Activated CD4-positive, alpha-beta memory T cell treated with anti-CD3 and anti-CD28 coated beads, Interleukin-2, amount 10 ng/mL, durations not matched to agents 7 days and 5 days (primary cell): ENCODE measurements at regions of chr1 and their contacts with region 1.

Region 1: DNA sequence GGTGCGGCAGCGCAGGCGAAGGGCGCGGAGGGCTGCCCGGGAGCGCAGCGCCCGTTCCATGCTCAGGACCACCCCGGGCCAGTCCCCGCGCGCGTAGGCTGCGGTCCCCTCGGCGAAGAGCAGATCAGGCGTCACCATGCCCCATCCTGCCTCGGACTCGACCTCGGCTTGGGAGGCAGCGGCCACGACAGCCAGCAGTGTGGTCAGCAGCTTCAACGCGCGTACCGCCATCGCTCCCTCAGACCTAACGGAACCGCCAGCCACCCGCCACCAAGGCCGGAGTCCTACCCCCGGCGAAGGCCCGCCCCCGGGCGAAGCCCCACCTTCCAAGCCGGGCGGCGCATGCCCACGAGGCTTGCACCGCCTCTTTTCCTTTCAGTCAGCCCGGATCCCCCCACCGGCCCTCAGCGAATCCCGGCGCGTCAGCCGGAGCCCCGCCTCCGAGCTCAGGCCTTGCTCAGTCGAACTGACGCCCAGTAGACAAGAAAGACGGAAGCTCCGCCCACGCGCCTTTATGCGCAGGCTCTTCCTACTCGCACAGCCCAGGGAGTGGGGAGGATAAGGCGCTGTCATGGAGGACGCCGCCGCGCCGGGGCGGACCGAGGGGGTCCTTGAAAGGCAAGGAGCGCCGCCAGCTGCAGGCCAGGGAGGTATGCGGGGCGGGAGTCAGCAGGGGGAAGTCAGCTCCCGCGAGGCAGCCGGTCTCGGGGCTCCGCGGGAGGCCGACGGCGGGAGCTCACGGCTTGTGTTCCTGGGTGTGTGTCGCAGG is at the starts of genes C1orf50 and P3H1:
- DNase-seq: peak; percentile 100
- H3K4me3 Mint-ChIP-seq: no peak within 1 kb of the TSS
- H3K27ac Mint-ChIP-seq: peak within 1 kb of the TSS; percentile 85
- H3K4me1 Mint-ChIP-seq: peaks cover 36% of the 10 kb centered on the region
- H3K27me3 Mint-ChIP-seq: no peaks in the 10 kb centered on the region
- total RNA-seq, gene C1orf50: 7.1 to 7.2 TPM
- total RNA-seq, gene P3H1: 40.1 to 43.3 TPM

Region 2: GRCh38 chr1:42657971-42658879 is 108.7 kb before region 1 on chr1 and contains the start of gene PPIH:
- CTCF ChIA-PET with region 1: interaction called, 13 read pairs
- POLR2A ChIA-PET with region 1: interaction called, 21 read pairs
- DNase-seq: peak; percentile 96
- H3K4me3 Mint-ChIP-seq: peak within 1 kb of the TSS; percentile 100
- H3K27ac Mint-ChIP-seq: peak within 1 kb of the TSS; percentile 95
- H3K4me1 Mint-ChIP-seq: peaks cover 49% of the 10 kb centered on the region
- H3K27me3 Mint-ChIP-seq: peaks cover 2% of the 10 kb centered on the region
- total RNA-seq, gene PPIH: 71.3 to 71.4 TPM

Region 3: DNA sequence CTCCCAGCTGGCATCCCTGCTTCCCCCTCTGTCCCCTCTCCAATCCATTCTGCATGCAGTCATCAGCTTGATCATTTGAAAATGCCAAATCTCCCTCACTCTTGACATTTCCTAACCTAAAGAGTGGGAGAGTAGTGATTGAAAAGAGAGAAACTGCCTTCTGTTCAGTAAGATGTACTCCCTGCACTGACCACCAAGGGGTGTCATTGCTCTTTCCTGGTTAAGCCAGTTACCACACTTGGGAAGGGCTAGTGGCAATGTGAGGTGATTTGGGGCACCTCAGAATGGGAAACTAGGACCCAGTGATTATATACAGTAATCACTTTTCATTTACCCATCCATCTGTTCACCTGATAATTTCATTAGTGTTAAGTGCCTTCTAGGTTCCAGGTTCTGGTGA is 10.9 kb after region 1 on chr1:
- CTCF ChIA-PET with region 1: interaction called, 21 read pairs
- POLR2A ChIA-PET with region 1: interaction called, 24 read pairs
- DNase-seq: peak; percentile 36
- H3K4me3 Mint-ChIP-seq: no peak overlapping the region
- H3K27ac Mint-ChIP-seq: no peak overlapping the region
- H3K4me1 Mint-ChIP-seq: peaks cover 37% of the 10 kb centered on the region
- H3K27me3 Mint-ChIP-seq: no peaks in the 10 kb centered on the region

Region 4: DNA sequence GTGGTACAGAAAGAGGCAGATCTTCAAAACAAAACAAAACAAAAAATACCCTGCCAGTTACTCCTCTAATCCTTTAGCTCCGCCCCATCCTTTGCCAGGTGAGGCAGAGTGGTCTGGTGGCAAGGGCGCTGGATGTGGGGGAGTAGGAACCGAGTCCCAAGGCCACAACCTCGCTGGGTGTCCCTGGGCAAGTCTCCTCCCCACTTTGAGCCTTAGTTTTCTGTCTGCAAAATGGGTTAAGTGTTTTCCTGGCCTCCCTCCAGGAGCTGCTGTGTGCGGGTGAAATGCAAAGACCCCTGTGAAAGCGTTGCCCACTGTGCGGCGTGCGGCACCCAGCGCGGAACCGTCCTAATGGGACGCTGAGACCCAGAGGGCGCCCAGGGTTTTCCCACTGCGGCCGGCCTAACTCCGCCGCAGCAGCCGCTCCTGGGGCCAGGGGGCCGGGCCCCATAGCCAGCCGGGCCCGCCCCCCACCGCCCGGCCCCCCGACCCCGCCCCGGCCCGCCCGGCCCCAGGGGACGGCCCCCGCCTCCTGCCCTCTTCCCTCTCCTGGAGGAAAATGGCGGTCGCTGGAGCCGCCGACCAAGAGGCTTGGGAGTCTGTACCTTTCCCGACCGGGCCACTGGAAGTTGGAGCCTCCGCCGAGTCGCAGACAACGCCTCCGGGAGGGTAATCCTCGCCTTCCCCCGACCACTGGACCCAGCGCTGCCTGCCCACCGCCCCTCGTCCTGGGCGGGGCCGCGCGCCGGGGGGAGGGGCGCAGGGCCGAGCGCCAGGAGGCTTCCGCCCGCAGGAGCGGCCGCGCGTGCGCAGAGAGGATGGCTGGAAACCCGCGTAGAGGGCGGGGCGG is 49.9 kb after region 1 on chr1 and contains the starts of genes ERMAP and SVBP:
- CTCF ChIA-PET with region 1: interaction called, 8 read pairs
- POLR2A ChIA-PET with region 1: interaction called, 35 read pairs
- DNase-seq: peak; percentile 94
- H3K4me3 Mint-ChIP-seq: peak within 1 kb of the TSS; percentile 79
- H3K27ac Mint-ChIP-seq: peak within 1 kb of the TSS; percentile 75
- H3K4me1 Mint-ChIP-seq: peaks cover 26% of the 10 kb centered on the region
- H3K27me3 Mint-ChIP-seq: no peaks in the 10 kb centered on the region
- total RNA-seq, gene ERMAP: 5.0 to 5.9 TPM
- total RNA-seq, gene SVBP: 17.4 to 19.2 TPM

Region 5: GRCh38 chr1:42913426-42914091 is 146.6 kb after region 1 on chr1:
- CTCF ChIA-PET with region 1: interaction called, 14 read pairs
- POLR2A ChIA-PET with region 1: no interaction called
- DNase-seq: peak; percentile 62
- H3K4me3 Mint-ChIP-seq: no peak overlapping the region
- H3K27ac Mint-ChIP-seq: no peak overlapping the region
- H3K4me1 Mint-ChIP-seq: peaks cover 16% of the 10 kb centered on the region
- H3K27me3 Mint-ChIP-seq: peaks cover 9% of the 10 kb centered on the region